Gastrocnemius medialis (tissue), 4 donors: ENCODE measurements at regions of chr1 and their contacts with region 1.

Region 1: GRCh38 chr1:12124693-12125421 is 41.9 kb upstream of the TNFRSF1B start:
- DNase-seq: peak; percentile 52 to 74
- ATAC-seq: peak; percentile 64 to 77
- H3K4me3 ChIP-seq: peak overlapping the region in 1 of 4 donors; percentile 38
- H3K27ac ChIP-seq: peak overlapping the region in 3 of 4 donors; percentile 40 to 57 (median 53)
- H3K4me1 ChIP-seq: peaks cover 0 to 4% of the 10 kb centered on the region in 2 donors
- H3K27me3 ChIP-seq: no peaks in the 10 kb centered on the region
- CTCF ChIP-seq: peak; percentile 92 to 98 (median 94)
- POLR2A ChIP-seq: no peak

Region 2: DNA sequence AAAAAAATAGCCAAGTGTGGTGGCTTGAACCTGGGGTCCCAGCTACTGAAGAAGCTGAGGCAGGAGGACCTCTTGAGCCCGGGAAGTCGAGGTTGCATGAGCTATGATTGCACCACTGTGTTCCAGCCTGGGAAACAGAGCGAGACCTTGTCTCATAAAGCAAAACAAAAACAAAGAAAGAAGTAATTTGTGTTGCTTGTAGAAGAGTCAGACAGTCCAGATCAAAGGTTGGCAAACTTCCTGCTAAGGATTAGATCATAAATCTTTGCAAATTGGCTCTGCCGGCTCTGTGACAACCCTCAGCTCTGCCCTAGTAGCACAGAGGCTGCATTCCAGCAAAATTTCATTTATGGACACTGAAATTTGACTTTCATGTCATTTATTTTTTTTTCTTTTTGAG is 163.6 kb before region 1 on chr1:
- in situ Hi-C with region 1: no loop called
- intact Hi-C with region 1: no loop called
- DNase-seq: no peak
- ATAC-seq: peak in 1 of 2 donors; percentile 28
- H3K4me3 ChIP-seq: no peak overlapping the region
- H3K27ac ChIP-seq: no peak overlapping the region
- H3K4me1 ChIP-seq: no peaks in the 10 kb centered on the region
- H3K27me3 ChIP-seq: no peaks in the 10 kb centered on the region
- CTCF ChIP-seq: no peak
- POLR2A ChIP-seq: no peak

Region 3: DNA sequence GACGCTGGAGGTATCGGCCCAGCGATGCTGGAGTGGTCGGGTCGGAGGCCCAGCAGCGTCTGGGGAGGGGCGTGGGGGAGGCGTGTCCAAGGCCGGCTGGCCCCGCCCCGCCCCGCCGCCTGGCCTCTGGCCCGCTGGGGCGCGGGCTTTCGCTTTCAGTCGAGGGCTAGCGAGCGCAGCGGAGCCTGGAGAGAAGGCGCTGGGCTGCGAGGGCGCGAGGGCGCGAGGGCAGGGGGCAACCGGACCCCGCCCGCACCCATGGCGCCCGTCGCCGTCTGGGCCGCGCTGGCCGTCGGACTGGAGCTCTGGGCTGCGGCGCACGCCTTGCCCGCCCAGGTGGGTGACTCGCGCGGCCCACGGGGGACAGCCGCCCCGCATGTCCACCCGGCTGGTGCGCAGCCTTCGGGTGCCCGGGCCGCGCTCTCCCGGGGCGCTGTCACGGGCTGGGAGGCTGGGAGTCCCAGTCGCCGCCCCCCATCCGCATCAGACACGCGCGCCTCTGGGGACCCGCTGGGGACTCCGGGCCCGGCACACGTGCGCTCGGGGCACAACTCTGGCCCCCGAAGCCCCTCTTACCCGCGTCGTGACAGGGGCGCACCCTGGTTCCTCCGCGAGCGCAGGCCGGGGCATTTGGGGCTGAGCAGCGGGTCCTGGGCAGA is 42.1 kb after region 1 on chr1 and contains the start of gene TNFRSF1B:
- in situ Hi-C with region 1: no loop called
- intact Hi-C with region 1: loop called (anchors 5 kb)
- DNase-seq: no peak
- ATAC-seq: peak; percentile 50 to 57
- H3K4me3 ChIP-seq: peak within 1 kb of the TSS; percentile 65 to 93 (median 73)
- H3K27ac ChIP-seq: peak within 1 kb of the TSS; percentile 72 to 85 (median 84)
- H3K4me1 ChIP-seq: peaks cover 20 to 27% of the 10 kb centered on the region in 2 donors
- H3K27me3 ChIP-seq: peaks cover 0 to 4% (median 0%) of the 10 kb centered on the region in 3 donors
- CTCF ChIP-seq: no peak
- POLR2A ChIP-seq: peak; percentile 75 to 86
- total RNA-seq, gene TNFRSF1B: 14.0 to 29.5 (median 18.8) TPM

Region 4: DNA sequence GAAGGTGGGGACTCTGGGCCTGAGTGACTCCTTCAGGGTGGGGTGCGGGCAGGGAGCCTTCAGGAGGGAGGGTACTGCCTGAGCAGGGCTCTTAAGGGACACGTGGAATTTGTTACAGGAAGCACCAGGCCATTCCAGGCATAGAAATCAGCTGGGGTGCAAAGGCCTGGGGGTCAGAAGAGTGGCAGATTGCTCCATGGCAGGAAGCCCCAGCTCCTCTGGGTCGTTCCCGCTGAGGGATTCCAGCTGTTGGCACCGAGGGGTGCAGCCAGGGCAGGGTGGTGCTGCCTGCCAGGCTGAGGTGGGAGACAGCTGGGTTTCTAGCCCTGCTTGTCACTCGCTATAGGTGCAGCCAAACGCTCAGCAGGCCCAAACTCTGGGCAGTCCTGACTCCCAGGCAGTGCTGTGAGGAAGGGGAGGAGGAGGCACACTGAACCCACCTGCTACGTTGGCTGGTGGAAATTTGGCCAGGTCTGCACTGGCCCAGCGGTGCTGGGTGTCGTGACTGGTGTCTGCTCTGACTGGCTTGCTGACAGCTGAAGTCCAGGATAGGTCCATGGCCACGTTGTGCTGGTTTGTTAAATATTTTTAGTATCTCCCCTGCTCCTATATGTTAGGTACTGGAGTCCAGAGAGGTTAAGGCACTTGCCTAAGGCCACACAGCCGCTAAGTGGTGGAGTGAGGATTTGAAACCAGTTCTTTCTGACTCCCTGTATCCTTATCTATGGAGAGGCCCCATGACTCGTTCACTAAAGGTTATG is 61.2 kb after region 1 on chr1:
- in situ Hi-C with region 1: no loop called
- intact Hi-C with region 1: loop called (anchors 5 kb)
- DNase-seq: peak in 1 of 2 donors; percentile 54
- ATAC-seq: peak in 1 of 2 donors; percentile 48
- H3K4me3 ChIP-seq: peak overlapping the region in 1 of 4 donors; percentile 48
- H3K27ac ChIP-seq: peak overlapping the region; percentile 74 to 88 (median 86)
- H3K4me1 ChIP-seq: peaks cover 35 to 51% of the 10 kb centered on the region in 2 donors
- H3K27me3 ChIP-seq: peaks cover 0 to 4% (median 0%) of the 10 kb centered on the region in 3 donors
- CTCF ChIP-seq: no peak
- POLR2A ChIP-seq: no peak

Region 5: GRCh38 chr1:12208764-12209494 is 84.1 kb after region 1 on chr1:
- in situ Hi-C with region 1: loop called (anchors 5 kb)
- intact Hi-C with region 1: loop called (anchors 1 kb)
- DNase-seq: peak; percentile 57 to 79
- ATAC-seq: peak; percentile 90 to 91
- H3K4me3 ChIP-seq: no peak overlapping the region
- H3K27ac ChIP-seq: peak overlapping the region in 1 of 4 donors; percentile 8
- H3K4me1 ChIP-seq: peaks cover 0 to 3% of the 10 kb centered on the region in 2 donors
- H3K27me3 ChIP-seq: no peaks in the 10 kb centered on the region
- CTCF ChIP-seq: peak; percentile 93 to 96 (median 96)
- POLR2A ChIP-seq: no peak

Region 6: DNA sequence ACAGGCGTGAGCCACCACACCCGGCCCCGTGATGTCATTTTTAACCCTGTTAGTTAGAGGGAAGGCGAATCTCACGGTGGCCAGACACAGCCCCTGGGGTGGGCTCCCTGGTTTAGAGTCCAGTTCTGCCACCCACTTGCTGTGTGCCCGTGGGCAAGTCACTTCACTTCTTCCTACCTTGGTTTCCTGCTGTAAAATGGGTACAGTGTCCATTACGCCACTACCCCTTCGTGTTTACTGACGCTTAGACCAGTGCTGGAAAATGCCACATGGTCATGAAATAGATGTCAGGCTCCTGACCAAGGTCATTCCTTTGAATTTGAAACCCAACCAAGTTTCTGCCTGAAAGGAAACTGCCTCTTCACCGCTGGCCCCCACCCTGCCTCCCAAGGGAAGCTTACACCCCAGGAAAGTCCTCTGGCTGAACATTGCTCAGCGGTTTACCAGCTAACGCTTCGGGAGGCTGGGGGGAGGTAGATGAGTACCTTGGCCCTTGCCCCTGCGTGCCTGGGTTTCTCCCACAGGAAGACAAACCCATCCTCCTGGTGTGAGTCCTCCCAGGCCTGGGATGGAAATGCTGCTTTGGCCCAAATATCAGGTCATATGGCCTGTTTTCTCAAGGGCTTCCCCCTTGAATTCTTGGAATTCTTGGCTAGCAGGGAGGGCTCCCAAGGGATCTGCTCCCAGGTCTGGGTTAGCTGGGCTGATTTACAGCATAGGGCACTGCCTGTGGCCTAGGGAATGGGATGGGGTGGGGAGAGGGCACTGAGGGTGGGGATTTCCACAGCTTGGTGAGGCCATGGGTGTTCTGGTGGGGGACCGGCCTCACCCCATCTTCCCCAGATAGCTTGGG is 511.5 kb after region 1 on chr1:
- in situ Hi-C with region 1: loop called in 1 of 4 experiments (anchors 25 kb)
- intact Hi-C with region 1: no loop called
- DNase-seq: peak in 1 of 2 donors; percentile 36
- ATAC-seq: peak; percentile 59 to 72
- H3K4me3 ChIP-seq: no peak overlapping the region
- H3K27ac ChIP-seq: peak overlapping the region; percentile 47 to 81 (median 78)
- H3K4me1 ChIP-seq: peaks cover 0 to 4% of the 10 kb centered on the region in 2 donors
- H3K27me3 ChIP-seq: no peaks in the 10 kb centered on the region
- CTCF ChIP-seq: no peak
- POLR2A ChIP-seq: no peak